ENCODE measurements at regions of chr18 and their contacts with region 1.

Region 1: GRCh38 chr18:55161916-55162315 is 202.7 kb upstream of the CCDC68 start:
- DNase-seq: no peak
- H3K4me3 ChIP-seq: no peak overlapping the region
- H3K4me3 Mint-ChIP-seq: no peak overlapping the region
- H3K27ac Mint-ChIP-seq: peak overlapping the region; percentile 29
- H3K4me1 ChIP-seq: peaks cover 50% of the 10 kb centered on the region
- H3K4me1 Mint-ChIP-seq: peaks cover 21% of the 10 kb centered on the region
- H3K27me3 ChIP-seq: no peaks in the 10 kb centered on the region
- H3K27me3 Mint-ChIP-seq: no peaks in the 10 kb centered on the region
- CTCF ChIP-seq: no peak

Region 2: GRCh38 chr18:55189972-55190371 is 28.1 kb after region 1 on chr18:
- CTCF ChIA-PET with region 1: no interaction called
- POLR2A ChIA-PET with region 1: no interaction called
- intact Hi-C with region 1: loop called (anchors 2 kb)
- DNase-seq: peak; percentile 66 to 80
- H3K4me3 ChIP-seq: no peak overlapping the region
- H3K4me3 Mint-ChIP-seq: no peak overlapping the region
- H3K27ac Mint-ChIP-seq: peak overlapping the region; percentile 54
- H3K4me1 ChIP-seq: peaks cover 12% of the 10 kb centered on the region; the same call in 1 of the 2 replicates
- H3K4me1 Mint-ChIP-seq: peaks cover 14% of the 10 kb centered on the region
- H3K27me3 ChIP-seq: no peaks in the 10 kb centered on the region
- H3K27me3 Mint-ChIP-seq: no peaks in the 10 kb centered on the region
- CTCF ChIP-seq: no peak

Measured in Caco-2 (cell line).